ENCODE measurements at regions of chr10 and their contacts with region 1.

Region 1: DNA sequence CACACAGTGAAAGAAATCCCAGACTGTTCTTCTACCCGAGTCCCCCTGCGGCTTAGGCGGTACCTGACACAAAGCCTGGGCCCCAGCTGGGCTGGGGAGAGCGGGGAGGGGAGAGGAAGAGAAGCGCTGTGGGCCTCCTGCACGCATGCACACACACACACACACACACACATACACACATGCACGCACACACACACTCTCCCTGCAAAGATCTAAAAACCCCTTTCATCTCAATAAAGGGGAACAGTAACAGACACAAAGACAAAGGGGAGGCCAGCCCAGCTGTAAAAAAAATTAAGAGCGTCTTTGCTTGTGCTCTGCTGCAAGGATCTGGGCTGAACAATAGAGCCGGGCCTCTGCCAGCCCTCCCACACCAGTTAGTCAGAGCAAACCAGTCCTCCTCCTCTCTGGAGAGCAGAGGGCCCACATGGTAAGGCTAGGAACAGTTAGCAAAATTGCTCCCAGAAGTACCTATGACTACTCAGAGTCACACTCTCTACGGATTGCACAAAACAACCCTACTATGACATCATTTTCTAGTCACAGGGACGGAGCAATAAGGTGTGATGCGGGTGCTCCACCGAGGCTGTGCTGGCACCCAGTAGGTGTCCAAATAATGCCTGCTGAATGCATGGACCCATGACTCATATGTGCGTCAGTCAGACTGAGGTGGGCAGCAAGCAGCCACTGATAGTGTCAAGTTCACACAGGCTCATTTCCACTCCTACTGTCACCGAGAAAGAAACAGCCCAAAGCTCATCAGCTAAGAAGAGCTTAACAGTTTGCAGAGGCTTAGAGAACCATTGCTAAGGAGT is 9.2 kb downstream of the ITPRIP start:
- DNase-seq: peak; percentile 50 to 90
- H3K4me3 ChIP-seq: peak overlapping the region; percentile 27; the same call in 1 of the 2 replicates
- H3K27ac ChIP-seq: peak overlapping the region; percentile 95
- H3K4me1 ChIP-seq: peaks cover 72% of the 10 kb centered on the region
- H3K27me3 ChIP-seq: no peaks in the 10 kb centered on the region
- CTCF ChIP-seq: no peak

Region 2: GRCh38 chr10:103181244-103181643 is 1147.9 kb before region 1 on chr10:
- CTCF ChIA-PET with region 1: no interaction called
- POLR2A ChIA-PET with region 1: interaction called, 10 read pairs
- intact Hi-C with region 1: no loop called
- DNase-seq: no peak
- H3K4me3 ChIP-seq: no peak overlapping the region
- H3K27ac ChIP-seq: no peak overlapping the region
- H3K4me1 ChIP-seq: peaks cover 24% of the 10 kb centered on the region
- H3K27me3 ChIP-seq: no peaks in the 10 kb centered on the region
- CTCF ChIP-seq: no peak

Region 3: DNA sequence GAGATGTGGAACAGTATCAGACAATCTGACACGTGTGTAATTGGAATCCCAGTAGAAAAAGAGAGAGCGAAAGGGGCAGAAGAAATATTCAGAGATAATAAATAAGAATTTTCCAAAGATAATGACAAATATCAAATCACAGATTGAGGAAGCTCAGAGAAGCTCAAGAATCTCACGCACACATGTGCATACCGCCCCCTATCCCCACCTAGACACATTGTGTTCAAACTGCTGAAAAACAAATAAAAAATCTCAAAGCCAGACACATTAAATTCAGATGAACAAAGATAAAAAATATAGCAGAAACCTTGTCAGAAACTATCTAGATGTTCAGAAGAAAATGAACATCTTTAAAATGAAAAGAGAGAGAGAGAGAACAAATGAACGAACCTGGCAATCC is 189.9 kb before region 1 on chr10:
- CTCF ChIA-PET with region 1: no interaction called
- POLR2A ChIA-PET with region 1: no interaction called
- intact Hi-C with region 1: no loop called
- DNase-seq: no peak
- H3K4me3 ChIP-seq: no peak overlapping the region
- H3K27ac ChIP-seq: no peak overlapping the region
- H3K4me1 ChIP-seq: no peaks in the 10 kb centered on the region
- H3K27me3 ChIP-seq: no peaks in the 10 kb centered on the region
- CTCF ChIP-seq: peak; percentile 9; the same call in 1 of the 2 replicates

Region 4: DNA sequence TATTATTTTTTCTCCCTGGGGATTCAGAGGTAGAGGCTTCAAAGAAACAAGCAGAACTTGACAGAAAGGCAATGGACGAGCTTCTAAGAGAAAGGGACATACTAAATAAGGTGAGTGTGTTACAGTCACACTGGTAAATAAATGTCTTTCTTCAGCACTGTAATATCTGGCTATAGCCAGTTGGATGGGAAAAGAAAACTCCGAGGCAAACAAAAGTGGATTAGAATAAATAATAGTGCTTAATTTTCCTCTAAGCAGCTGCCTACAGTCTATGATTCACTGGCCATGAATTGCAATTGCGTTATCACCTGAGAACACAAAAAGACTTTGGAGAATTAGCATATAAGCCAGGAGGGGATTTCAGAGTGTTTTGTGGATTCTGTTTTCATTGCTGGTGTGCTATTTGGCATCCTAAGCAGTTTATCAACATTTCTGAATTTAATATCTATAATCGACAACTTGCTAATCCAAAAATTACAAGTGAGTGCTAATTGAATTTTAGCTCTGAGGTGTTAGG is 47.7 kb after region 1 on chr10:
- CTCF ChIA-PET with region 1: no interaction called
- POLR2A ChIA-PET with region 1: interaction called, 18 read pairs
- intact Hi-C with region 1: no loop called
- DNase-seq: no peak
- H3K4me3 ChIP-seq: no peak overlapping the region
- H3K27ac ChIP-seq: no peak overlapping the region
- H3K4me1 ChIP-seq: no peaks in the 10 kb centered on the region
- H3K27me3 ChIP-seq: peaks cover 37% of the 10 kb centered on the region
- CTCF ChIP-seq: no peak

Measured in PC-9 (cell line).